ENCODE measurements at regions of chr3 and their contacts with region 1.

Region 1: DNA sequence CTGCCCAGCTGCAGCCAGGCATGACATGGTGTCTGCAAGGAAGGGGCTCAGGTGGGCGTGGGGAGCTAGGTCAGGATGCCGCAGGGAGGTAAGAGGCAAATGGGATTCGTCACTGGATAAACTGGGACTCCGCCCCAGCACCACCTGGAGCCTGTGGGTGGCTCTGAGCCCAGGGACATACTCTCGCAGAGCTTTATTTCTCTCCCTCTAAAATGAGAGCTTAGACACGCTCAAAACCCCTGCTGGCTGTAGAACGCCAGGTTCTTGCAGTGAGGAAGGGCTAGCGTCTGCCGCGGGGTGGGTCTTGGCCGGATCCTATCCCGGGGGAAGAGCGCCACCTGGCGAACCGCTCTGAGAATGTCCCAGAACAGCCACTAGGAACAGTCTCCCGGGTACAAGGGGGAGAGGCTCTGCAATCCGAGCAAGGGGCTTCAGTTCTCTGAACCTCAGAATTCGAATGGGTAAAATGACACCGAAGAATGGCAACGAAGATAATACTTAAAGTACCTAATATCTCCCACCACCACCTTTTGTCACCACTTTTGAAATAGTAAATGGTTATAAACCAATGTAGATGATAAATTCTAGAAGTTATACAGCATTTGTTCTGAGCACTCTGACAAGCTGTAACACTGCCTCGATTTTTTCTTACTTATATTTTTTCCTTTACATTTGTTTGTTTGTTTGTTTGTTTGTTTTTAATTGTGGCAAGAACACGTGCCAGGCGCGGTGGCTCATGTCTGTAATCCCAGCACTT is 53.2 kb upstream of the SRGAP3 start:
- DNase-seq: peak; percentile 88
- ATAC-seq: peak; percentile 85
- H3K4me3 Mint-ChIP-seq: peak overlapping the region; percentile 15
- H3K27ac Mint-ChIP-seq: no peak overlapping the region
- H3K4me1 Mint-ChIP-seq: peaks cover 16% of the 10 kb centered on the region
- H3K27me3 Mint-ChIP-seq: peaks cover 5% of the 10 kb centered on the region

Region 2: GRCh38 chr3:8938021-8938420 is 364.6 kb before region 1 on chr3:
- CTCF ChIA-PET with region 1: no interaction called
- POLR2A ChIA-PET with region 1: no interaction called
- intact Hi-C with region 1: no loop called
- DNase-seq: no peak
- ATAC-seq: peak; percentile 33
- H3K4me3 Mint-ChIP-seq: no peak overlapping the region
- H3K27ac Mint-ChIP-seq: no peak overlapping the region
- H3K4me1 Mint-ChIP-seq: no peaks in the 10 kb centered on the region
- H3K27me3 Mint-ChIP-seq: no peaks in the 10 kb centered on the region

Region 3: GRCh38 chr3:8970971-8971589 is 331.5 kb before region 1 on chr3:
- CTCF ChIA-PET with region 1: interaction called, 106 read pairs
- POLR2A ChIA-PET with region 1: no interaction called
- intact Hi-C with region 1: loop called (anchors 1 kb)
- DNase-seq: peak; percentile 81
- ATAC-seq: peak; percentile 80
- H3K4me3 Mint-ChIP-seq: no peak overlapping the region
- H3K27ac Mint-ChIP-seq: no peak overlapping the region
- H3K4me1 Mint-ChIP-seq: peaks cover 2% of the 10 kb centered on the region
- H3K27me3 Mint-ChIP-seq: peaks cover 4% of the 10 kb centered on the region

Region 4: GRCh38 chr3:9000041-9000440 is 302.6 kb before region 1 on chr3:
- CTCF ChIA-PET with region 1: interaction called, 11 read pairs
- POLR2A ChIA-PET with region 1: no interaction called
- intact Hi-C with region 1: no loop called
- DNase-seq: no peak
- ATAC-seq: no peak
- H3K4me3 Mint-ChIP-seq: no peak overlapping the region
- H3K27ac Mint-ChIP-seq: no peak overlapping the region
- H3K4me1 Mint-ChIP-seq: no peaks in the 10 kb centered on the region
- H3K27me3 Mint-ChIP-seq: no peaks in the 10 kb centered on the region

Region 5: GRCh38 chr3:9067352-9067975 is 235.1 kb before region 1 on chr3:
- CTCF ChIA-PET with region 1: interaction called, 4 read pairs
- POLR2A ChIA-PET with region 1: no interaction called
- intact Hi-C with region 1: loop called (anchors 1 to 2 kb)
- DNase-seq: peak; percentile 56
- ATAC-seq: peak; percentile 63
- H3K4me3 Mint-ChIP-seq: no peak overlapping the region
- H3K27ac Mint-ChIP-seq: no peak overlapping the region
- H3K4me1 Mint-ChIP-seq: no peaks in the 10 kb centered on the region
- H3K27me3 Mint-ChIP-seq: no peaks in the 10 kb centered on the region

Region 6: GRCh38 chr3:9168241-9168741 is 134.3 kb before region 1 on chr3:
- CTCF ChIA-PET with region 1: interaction called, 4 read pairs
- POLR2A ChIA-PET with region 1: no interaction called
- intact Hi-C with region 1: loop called (anchors 5 kb)
- DNase-seq: peak; percentile 82
- ATAC-seq: peak; percentile 94
- H3K4me3 Mint-ChIP-seq: no peak overlapping the region
- H3K27ac Mint-ChIP-seq: peak overlapping the region; percentile 17
- H3K4me1 Mint-ChIP-seq: no peaks in the 10 kb centered on the region
- H3K27me3 Mint-ChIP-seq: no peaks in the 10 kb centered on the region

Region 7: GRCh38 chr3:9249273-9250192 is 53.1 kb before region 1 on chr3 and contains the start of gene SRGAP3:
- CTCF ChIA-PET with region 1: interaction called, 5 read pairs
- POLR2A ChIA-PET with region 1: interaction called, 5 read pairs
- intact Hi-C with region 1: loop called in 1 of 2 experiments (anchors 1 kb)
- DNase-seq: peak; percentile 84
- ATAC-seq: peak; percentile 100
- H3K4me3 Mint-ChIP-seq: peak within 1 kb of the TSS; percentile 72
- H3K27ac Mint-ChIP-seq: peak within 1 kb of the TSS; percentile 23
- H3K4me1 Mint-ChIP-seq: peaks cover 24% of the 10 kb centered on the region
- H3K27me3 Mint-ChIP-seq: peaks cover 8% of the 10 kb centered on the region
- total RNA-seq, gene SRGAP3: 1.2 to 1.5 TPM

Region 8: DNA sequence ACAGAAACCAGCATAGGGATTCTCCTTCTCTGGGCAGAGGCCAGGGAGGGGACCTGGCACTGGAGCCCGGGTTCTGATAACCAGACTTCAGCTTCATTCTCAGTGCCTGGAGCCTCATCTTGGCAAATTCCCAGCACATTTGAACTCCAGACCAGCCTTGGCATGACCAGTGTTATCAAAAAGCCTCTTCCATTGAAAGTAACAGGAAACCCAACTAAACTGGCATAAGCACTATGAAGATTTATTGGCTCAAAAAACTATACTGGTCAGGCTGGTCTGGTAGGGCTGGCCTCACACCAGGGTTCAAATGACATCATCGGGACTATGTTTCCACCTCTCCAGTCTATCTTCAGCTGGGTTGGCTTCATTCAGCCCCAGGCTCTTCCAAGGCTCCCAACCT is 12.2 kb after region 1 on chr3:
- CTCF ChIA-PET with region 1: interaction called, 10 read pairs
- POLR2A ChIA-PET with region 1: no interaction called
- intact Hi-C with region 1: no loop called
- DNase-seq: no peak
- ATAC-seq: no peak
- H3K4me3 Mint-ChIP-seq: no peak overlapping the region
- H3K27ac Mint-ChIP-seq: no peak overlapping the region
- H3K4me1 Mint-ChIP-seq: no peaks in the 10 kb centered on the region
- H3K27me3 Mint-ChIP-seq: no peaks in the 10 kb centered on the region